OCI-LY7 (cell line): ENCODE measurements at regions of chr1 and their contacts with region 1.

Region 1: DNA sequence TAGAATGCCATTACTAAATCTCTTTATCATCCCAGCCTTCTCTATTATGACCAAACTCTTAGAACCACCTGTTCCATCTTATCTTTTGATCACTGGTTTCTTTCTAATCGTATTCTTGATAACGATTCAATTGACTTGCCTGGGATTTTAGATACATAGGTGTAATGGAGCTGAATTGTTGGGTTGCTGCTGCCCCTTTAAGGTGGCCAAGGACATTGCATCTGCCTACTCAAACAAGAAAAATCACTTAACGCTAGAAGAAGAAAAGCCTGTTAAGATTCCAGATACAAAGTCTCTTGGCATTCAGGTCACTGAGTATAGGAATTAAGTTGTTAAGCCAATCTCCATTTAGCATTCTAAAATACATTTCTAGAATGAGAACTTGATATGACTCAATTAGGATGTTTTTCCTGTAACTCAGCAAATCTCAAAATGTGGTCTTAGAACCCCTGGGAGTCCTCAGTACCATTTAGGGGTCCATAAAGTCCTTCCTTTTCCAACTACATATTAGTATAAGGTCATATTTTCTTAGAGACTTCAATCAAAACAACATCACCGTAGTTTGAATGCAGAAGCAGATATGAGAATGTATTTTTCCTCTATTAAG is 12.4 kb downstream of the NEXN start:
- DNase-seq: peak; percentile 61
- H3K4me3 ChIP-seq: no peak overlapping the region
- H3K27ac ChIP-seq: no peak overlapping the region
- H3K4me1 ChIP-seq: no peaks in the 10 kb centered on the region
- CTCF ChIP-seq: peak; percentile 96

Region 2: GRCh38 chr1:77156214-77156613 is 744.6 kb before region 1 on chr1:
- CTCF ChIA-PET with region 1: no interaction called
- POLR2A ChIA-PET with region 1: no interaction called
- intact Hi-C with region 1: loop called (anchors 5 kb)
- DNase-seq: no peak
- H3K4me3 ChIP-seq: no peak overlapping the region
- H3K27ac ChIP-seq: no peak overlapping the region
- H3K4me1 ChIP-seq: no peaks in the 10 kb centered on the region
- CTCF ChIP-seq: no peak

Region 3: DNA sequence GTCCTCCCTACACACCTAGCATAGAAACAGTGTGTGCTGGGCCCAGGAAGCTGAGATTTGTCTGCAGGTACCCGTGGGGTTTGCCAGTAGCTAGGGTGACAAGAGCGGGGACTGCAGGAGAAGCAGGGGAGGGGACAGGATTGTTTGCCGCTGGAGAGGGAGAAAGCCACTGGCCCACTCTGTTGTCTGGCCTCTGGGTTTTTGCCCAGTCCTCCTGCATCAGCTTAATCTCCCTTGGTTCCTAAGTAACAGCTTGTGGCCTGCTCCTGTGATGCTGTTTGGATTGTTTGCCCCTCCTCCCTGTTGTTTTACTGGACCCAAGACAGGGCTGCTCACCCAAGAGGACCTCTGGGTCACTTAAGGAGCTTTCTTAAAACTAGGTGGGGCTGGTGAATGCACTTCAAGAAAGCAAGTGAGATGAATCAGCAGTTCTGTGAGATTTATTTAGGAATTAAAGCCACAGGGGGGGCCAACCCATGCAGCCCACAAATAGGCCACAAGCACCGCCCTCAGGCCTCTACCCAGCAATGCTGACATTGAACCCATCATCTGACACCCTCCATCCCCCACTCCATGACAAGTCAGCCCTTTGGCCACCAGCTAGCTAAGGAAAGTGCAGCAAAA is 361.2 kb before region 1 on chr1:
- CTCF ChIA-PET with region 1: no interaction called
- POLR2A ChIA-PET with region 1: no interaction called
- intact Hi-C with region 1: loop called (anchors 10 kb)
- DNase-seq: no peak
- H3K4me3 ChIP-seq: no peak overlapping the region
- H3K27ac ChIP-seq: no peak overlapping the region
- H3K4me1 ChIP-seq: peaks cover 13% of the 10 kb centered on the region
- CTCF ChIP-seq: no peak

Region 4: DNA sequence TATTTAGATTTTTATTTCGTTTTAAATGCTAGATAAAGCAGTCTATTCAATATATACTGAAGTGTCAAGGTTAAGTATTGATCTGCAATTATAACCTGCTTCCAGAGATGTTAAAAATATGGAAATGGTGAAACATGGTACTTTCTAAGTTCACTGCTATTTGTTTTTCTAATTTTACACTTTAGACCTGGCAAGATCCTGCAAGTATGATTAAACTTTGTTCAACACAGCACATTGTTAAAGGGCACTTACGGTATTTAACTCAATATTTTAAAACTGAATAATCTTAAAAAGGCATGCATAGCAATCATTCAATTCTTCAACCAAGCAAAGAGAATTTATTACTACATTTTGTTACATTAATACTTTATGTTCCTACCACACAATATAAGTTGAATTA is 182.6 kb before region 1 on chr1:
- CTCF ChIA-PET with region 1: no interaction called
- POLR2A ChIA-PET with region 1: no interaction called
- intact Hi-C with region 1: loop called (anchors 10 kb)
- DNase-seq: no peak
- H3K4me3 ChIP-seq: no peak overlapping the region
- H3K27ac ChIP-seq: no peak overlapping the region
- H3K4me1 ChIP-seq: no peaks in the 10 kb centered on the region
- CTCF ChIP-seq: no peak

Region 5: DNA sequence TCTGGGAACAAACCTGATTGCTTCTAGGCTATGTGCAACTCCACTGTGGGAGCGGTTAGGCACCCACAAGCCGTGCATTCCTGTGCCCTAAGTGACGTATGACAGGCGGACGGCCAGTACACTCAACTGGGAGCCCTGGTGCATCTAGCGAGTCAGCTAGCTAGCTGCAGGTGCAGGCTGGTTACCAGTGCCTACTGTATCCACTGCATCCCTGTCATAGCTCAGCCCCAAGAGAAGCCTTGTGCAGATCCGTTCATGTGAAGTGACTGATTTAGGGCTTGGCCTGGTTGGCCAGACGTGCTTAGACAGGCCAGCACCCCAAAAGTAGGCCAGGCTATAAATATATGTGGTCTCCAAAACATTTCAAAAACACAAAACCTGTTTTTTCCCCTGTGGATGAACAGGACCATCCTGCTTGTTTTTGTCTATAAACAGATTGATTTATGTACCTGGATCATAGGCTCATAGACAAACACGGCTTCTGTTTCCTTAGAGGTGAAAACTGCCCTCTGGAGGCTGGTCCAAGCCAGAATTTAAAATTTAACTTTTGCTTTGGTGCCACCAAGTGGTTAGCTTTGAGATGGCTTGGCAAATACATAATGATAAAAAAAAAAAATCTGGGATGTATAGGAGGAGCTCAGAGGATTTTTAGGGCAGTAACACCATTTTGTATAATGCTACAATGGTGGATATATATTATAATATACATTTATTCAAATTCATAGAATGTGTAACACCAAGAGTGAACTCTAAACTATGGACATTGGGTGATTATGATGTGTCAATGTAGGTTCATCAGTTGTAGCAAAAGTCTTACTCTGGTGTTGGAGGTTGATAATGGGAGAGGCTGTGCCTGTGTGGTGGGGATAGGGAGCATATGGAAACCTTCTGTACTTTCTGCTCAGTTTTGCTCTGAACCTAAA is 213.5 kb after region 1 on chr1:
- CTCF ChIA-PET with region 1: no interaction called
- POLR2A ChIA-PET with region 1: no interaction called
- intact Hi-C with region 1: loop called (anchors 2 kb)
- DNase-seq: peak; percentile 81
- H3K4me3 ChIP-seq: no peak overlapping the region
- H3K27ac ChIP-seq: no peak overlapping the region
- H3K4me1 ChIP-seq: no peaks in the 10 kb centered on the region
- CTCF ChIP-seq: peak; percentile 100

Region 6: GRCh38 chr1:78303620-78304019 is 402.8 kb after region 1 on chr1:
- CTCF ChIA-PET with region 1: no interaction called
- POLR2A ChIA-PET with region 1: no interaction called
- intact Hi-C with region 1: no loop called
- DNase-seq: no peak
- H3K4me3 ChIP-seq: no peak overlapping the region
- H3K27ac ChIP-seq: no peak overlapping the region
- H3K4me1 ChIP-seq: no peaks in the 10 kb centered on the region
- CTCF ChIP-seq: no peak